ENCODE measurements at regions of chr6 and their contacts with region 1.

Region 1: GRCh38 chr6:19873031-19873430 is 35.9 kb downstream of the ID4 start:
- DNase-seq: no peak
- ATAC-seq: no peak
- H3K4me3 ChIP-seq: no peak overlapping the region
- H3K27ac ChIP-seq: no peak overlapping the region
- H3K4me1 ChIP-seq: peaks cover 11% of the 10 kb centered on the region
- H3K27me3 ChIP-seq: no peaks in the 10 kb centered on the region
- CTCF ChIP-seq: no peak
- POLR2A ChIP-seq: no peak

Region 2: GRCh38 chr6:20044883-20045282 is 171.9 kb after region 1 on chr6:
- intact Hi-C with region 1: loop called (anchors 10 kb)
- DNase-seq: no peak
- ATAC-seq: no peak
- H3K4me3 ChIP-seq: no peak overlapping the region
- H3K27ac ChIP-seq: no peak overlapping the region
- H3K4me1 ChIP-seq: no peaks in the 10 kb centered on the region
- H3K27me3 ChIP-seq: no peaks in the 10 kb centered on the region
- CTCF ChIP-seq: no peak
- POLR2A ChIP-seq: no peak

Measured in body of pancreas (tissue), 4 donors.